Activated naive CD4-positive, alpha-beta T cell treated with anti-CD3 and anti-CD28 coated beads for 36 hours (primary cell): ENCODE measurements at regions of chr3 and their contacts with region 1.

Region 1: DNA sequence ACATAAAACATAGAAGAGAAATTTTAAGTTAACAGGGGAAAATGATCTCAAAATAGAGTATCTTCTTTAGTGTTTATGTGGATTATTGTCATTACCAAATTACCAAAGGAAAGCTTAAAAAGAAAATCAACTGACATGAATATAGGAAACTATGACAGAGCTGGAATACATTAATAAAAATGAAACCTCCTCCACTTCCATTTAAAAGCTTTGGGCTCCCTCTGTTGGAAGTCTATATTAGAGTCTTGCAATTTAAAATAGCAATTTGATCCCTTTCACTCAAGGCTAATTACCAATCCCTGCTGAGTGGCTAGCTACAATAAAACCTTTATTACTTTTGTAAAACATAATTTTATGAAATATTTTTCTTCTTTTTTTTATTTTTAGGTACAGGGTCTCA is 61.4 kb upstream of the IMPG2 start:
- DNase-seq: no peak
- H3K4me3 Mint-ChIP-seq: no peak overlapping the region
- H3K27ac Mint-ChIP-seq: no peak overlapping the region
- H3K4me1 Mint-ChIP-seq: peaks cover 59% of the 10 kb centered on the region
- H3K27me3 Mint-ChIP-seq: no peaks in the 10 kb centered on the region

Region 2: DNA sequence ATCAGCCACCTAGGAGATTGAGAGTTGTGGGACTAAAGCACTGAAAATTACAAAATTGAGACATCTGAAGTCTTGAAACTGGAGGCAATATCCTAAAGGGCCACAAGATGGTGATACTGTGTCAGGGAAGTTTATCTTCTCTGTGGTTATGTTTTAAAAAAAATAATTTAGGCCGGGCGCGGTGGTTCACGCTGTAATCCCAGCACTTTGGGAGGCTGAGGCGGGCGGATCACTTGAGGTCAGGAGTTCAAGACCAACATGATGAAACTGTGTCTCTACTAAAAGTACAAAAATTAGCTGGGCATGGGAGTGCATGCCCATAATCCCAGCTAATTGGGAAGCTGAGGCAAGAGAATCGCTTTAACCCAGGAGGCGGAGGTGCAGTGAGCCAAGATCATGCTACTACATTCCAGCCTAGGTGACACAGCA is 1065.2 kb before region 1 on chr3:
- CTCF ChIA-PET with region 1: no interaction called
- intact Hi-C with region 1: loop called (anchors 5 kb)
- DNase-seq: peak; percentile 55
- H3K4me3 Mint-ChIP-seq: peak overlapping the region; percentile 18
- H3K27ac Mint-ChIP-seq: no peak overlapping the region
- H3K4me1 Mint-ChIP-seq: peaks cover 13% of the 10 kb centered on the region
- H3K27me3 Mint-ChIP-seq: no peaks in the 10 kb centered on the region

Region 3: DNA sequence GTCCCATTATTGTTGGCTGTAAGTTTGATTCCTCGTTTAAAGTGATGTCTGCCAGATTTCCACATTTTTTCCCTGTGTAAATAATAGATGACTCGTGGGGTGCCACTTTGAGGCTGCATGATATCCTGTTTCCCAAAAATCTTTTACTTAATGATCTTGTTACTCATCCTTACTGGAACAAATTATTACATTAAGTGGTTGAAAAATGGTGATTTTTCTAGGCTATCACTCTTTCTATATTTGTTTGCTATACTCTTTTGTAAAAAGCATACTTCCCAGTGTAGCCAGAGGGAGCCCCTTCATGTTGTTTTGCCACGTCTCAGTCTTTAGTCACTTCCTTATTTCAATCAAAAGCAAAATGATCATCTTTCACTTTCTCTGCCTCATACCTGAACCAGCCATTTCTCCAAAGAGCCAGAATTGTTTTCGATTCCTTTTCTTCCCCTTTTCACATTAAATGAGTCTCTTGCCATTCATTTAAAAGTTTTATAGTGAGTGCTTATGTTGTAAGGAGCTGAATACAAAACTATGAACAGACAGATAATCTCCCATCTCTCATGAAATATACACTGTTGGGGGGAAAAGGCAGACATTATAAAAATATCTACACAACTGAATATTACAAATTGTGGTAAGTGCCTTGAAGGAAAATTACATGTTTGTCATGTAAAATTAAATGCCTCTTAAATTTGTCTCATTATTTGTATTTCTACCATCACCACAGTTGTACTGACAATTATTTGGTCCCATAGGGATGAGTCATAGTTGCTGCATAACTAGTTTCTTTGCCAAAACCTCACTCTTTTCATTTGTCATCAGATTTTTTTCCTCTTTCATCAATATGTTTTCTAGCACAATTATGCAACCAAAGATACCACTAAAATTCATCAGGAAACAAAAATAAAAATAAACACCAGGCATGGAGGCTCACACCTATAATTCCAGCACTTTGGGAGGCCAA is 730.9 kb before region 1 on chr3:
- CTCF ChIA-PET with region 1: no interaction called
- intact Hi-C with region 1: loop called (anchors 1 kb)
- DNase-seq: peak; percentile 57
- H3K4me3 Mint-ChIP-seq: peak overlapping the region; percentile 30
- H3K27ac Mint-ChIP-seq: peak overlapping the region; percentile 84
- H3K4me1 Mint-ChIP-seq: peaks cover 16% of the 10 kb centered on the region
- H3K27me3 Mint-ChIP-seq: no peaks in the 10 kb centered on the region

Region 4: GRCh38 chr3:100893590-100893989 is 488.2 kb before region 1 on chr3:
- CTCF ChIA-PET with region 1: no interaction called
- intact Hi-C with region 1: loop called (anchors 2 kb)
- DNase-seq: no peak
- H3K4me3 Mint-ChIP-seq: no peak overlapping the region
- H3K27ac Mint-ChIP-seq: no peak overlapping the region
- H3K4me1 Mint-ChIP-seq: no peaks in the 10 kb centered on the region
- H3K27me3 Mint-ChIP-seq: peaks cover 21% of the 10 kb centered on the region

Region 5: GRCh38 chr3:100999160-100999559 is 382.6 kb before region 1 on chr3:
- CTCF ChIA-PET with region 1: no interaction called
- intact Hi-C with region 1: no loop called
- DNase-seq: no peak
- H3K4me3 Mint-ChIP-seq: no peak overlapping the region
- H3K27ac Mint-ChIP-seq: no peak overlapping the region
- H3K4me1 Mint-ChIP-seq: no peaks in the 10 kb centered on the region
- H3K27me3 Mint-ChIP-seq: peaks cover 14% of the 10 kb centered on the region

Region 6: DNA sequence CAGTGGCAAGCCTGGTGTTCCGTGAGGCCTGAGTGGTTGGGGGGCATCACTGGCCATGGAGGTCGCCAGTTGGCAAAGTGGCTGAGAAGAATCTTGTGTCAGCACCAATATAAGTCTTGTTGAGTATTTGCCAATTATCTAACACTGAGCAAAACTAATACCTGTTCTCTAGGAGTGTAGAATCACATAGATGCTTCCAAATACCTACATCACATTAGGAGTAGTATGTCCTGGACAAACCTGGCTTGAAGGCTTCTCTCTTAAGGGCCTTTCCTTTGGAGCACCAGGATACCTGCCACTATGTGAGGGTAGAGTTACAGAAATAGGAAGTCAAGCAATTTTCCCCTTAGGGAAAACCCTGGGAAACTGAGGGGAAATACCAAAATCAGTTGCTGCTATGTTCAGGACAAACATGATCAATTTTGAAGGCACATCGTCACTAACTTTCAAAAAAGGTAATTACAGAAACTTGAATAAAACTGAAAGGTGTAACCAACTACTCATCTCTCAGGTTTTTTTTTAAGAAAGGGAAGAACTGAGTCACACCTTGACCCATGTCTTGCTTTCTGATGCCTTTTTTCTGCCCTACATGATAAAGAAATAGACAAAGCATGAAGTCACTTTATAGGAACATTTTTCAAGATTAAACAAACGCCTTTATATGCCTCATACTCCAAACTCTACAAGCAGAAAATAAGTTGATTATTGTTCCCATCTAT is 161.8 kb before region 1 on chr3:
- CTCF ChIA-PET with region 1: interaction called, 4 read pairs
- intact Hi-C with region 1: loop called (anchors 1 kb)
- DNase-seq: peak; percentile 8
- H3K4me3 Mint-ChIP-seq: no peak overlapping the region
- H3K27ac Mint-ChIP-seq: peak overlapping the region; percentile 61
- H3K4me1 Mint-ChIP-seq: peaks cover 16% of the 10 kb centered on the region
- H3K27me3 Mint-ChIP-seq: no peaks in the 10 kb centered on the region

Region 7: DNA sequence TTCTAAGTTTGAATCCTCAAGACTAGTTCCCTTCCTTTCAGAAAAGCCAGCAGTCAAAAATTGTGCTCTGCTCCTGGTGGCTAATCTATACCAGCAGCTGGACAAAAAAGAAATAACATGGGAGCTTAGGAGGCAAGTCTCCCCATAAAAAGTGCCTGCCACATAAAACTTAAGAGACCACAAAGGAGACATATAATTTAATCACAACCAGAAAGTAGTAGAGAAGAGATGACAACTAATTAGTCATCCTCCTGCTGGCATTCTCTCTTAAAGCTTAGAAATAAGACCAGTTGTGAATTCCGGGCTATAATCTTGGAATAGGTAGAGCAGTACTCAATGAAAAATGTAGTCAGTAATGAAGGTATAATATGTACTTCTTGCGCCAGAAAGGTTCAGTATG is 41.2 kb before region 1 on chr3:
- CTCF ChIA-PET with region 1: no interaction called
- intact Hi-C with region 1: no loop called
- DNase-seq: no peak
- H3K4me3 Mint-ChIP-seq: no peak overlapping the region
- H3K27ac Mint-ChIP-seq: no peak overlapping the region
- H3K4me1 Mint-ChIP-seq: no peaks in the 10 kb centered on the region
- H3K27me3 Mint-ChIP-seq: no peaks in the 10 kb centered on the region

Region 8: GRCh38 chr3:101643861-101644613 is 262.2 kb after region 1 on chr3:
- CTCF ChIA-PET with region 1: no interaction called
- intact Hi-C with region 1: loop called (anchors 2 kb)
- DNase-seq: peak; percentile 69
- H3K4me3 Mint-ChIP-seq: no peak overlapping the region
- H3K27ac Mint-ChIP-seq: peak overlapping the region; percentile 83
- H3K4me1 Mint-ChIP-seq: peaks cover 24% of the 10 kb centered on the region
- H3K27me3 Mint-ChIP-seq: no peaks in the 10 kb centered on the region